ENCODE measurements at regions of chr9 and their contacts with region 1.

Region 1: GRCh38 chr9:38371495-38371894 is 21.0 kb upstream of the ALDH1B1 start:
- DNase-seq: peak in 6 of 7 donors; percentile 26 to 63 (median 32)
- H3K4me3 ChIP-seq: no peak overlapping the region
- H3K27ac ChIP-seq: no peak overlapping the region
- H3K4me1 ChIP-seq: no peaks in the 10 kb centered on the region
- H3K27me3 ChIP-seq: no peaks in the 10 kb centered on the region
- CTCF ChIP-seq: peak in 3 of 6 experiments; percentile 31 to 40 (median 34)
- POLR2A ChIP-seq: no peak

Region 2: DNA sequence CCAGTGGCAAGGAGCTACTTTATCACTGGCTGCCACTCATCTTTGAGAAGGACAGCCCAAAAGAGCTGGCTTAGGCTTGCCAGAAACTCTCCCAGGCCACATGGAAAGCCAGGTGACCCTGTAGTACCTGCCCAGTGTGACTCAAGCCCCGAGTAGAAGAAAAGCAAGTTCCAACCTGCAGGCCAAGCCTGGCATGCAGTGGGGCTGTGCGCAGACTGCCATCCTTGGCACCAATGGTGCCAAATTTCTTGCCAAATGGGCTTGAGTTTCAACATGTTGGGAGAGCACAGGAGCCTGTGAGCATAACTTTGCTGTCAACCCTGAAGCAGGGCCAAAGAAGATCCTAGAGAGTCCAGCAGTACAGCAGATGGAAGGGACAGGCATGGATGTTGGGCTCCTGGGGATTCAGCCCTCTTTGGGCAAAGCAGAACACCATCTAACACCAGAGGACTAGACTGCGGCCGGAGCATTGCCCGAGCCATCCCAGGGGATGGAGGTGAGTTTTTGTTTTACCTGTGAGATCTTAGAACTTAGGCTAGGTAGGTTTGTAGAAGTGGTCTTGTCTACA is 275.2 kb before region 1 on chr9:
- intact Hi-C with region 1: no loop called
- DNase-seq: peak in 1 of 7 donors; percentile 28
- H3K4me3 ChIP-seq: no peak overlapping the region
- H3K27ac ChIP-seq: no peak overlapping the region
- H3K4me1 ChIP-seq: no peaks in the 10 kb centered on the region
- H3K27me3 ChIP-seq: no peaks in the 10 kb centered on the region
- CTCF ChIP-seq: no peak
- POLR2A ChIP-seq: no peak

Region 3: DNA sequence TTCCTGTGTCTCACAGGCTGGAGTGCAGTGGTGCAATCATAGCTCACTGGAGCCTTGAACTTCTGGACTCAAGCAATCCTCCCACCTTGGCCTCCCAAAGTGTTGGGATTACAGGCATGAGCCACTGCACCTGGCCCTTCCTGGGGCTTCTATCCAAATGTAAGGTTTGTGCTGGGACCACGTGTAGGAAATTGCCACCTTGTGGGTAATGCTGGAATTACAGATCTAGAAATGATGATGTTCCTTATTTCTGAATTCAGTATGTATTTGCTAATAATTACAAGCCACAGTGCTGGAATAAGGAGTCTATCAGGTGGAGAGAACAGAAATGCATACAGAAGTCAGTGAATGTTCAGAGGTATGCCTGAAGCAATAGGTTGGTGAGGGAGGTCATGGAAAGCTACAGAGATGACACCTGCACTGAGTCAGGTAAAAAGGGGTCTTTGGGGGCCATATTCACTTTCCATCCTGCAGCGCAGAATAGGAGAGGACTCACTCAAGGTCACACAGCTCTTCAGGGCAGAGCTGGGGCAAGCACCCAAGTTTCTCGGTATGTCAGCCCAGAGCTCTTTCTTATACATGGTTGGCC is 61.5 kb after region 1 on chr9:
- intact Hi-C with region 1: loop called in 1 of 2 experiments (anchors 10 kb)
- DNase-seq: peak in 1 of 7 donors; percentile 18
- H3K4me3 ChIP-seq: no peak overlapping the region
- H3K27ac ChIP-seq: no peak overlapping the region
- H3K4me1 ChIP-seq: no peaks in the 10 kb centered on the region
- H3K27me3 ChIP-seq: no peaks in the 10 kb centered on the region
- CTCF ChIP-seq: peak; percentile 47 to 63 (median 56)
- POLR2A ChIP-seq: no peak